Calu3 (cell line): ENCODE measurements at regions of chr2 and their contacts with region 1.

Region 1: DNA sequence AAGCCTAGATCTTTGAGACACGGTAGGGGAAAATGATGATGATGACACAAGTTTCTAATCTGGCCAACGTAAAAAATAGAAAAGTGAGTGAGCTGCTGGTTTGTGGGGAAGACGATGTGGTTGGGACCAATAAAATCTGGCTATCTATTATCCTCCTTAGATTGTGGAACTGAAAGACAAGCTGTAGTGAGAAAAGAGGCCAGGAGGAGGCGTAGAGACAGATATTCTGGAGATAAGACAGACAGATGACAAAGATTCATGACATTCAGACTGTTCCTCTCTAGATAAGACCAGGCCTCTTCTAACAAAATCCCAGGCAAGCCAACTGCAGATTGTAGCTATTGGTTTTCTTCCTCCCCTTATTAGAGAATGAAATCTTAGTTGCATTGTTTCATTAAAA is 376.3 kb upstream of the UBE2E3 start:
- DNase-seq: peak; percentile 10
- H3K4me3 Mint-ChIP-seq: no peak overlapping the region
- H3K27ac Mint-ChIP-seq: no peak overlapping the region
- H3K4me1 Mint-ChIP-seq: no peaks in the 10 kb centered on the region
- H3K27me3 Mint-ChIP-seq: no peaks in the 10 kb centered on the region
- CTCF ChIP-seq: peak; percentile 43

Region 2: GRCh38 chr2:180761224-180761623 is 157.1 kb after region 1 on chr2:
- CTCF ChIA-PET with region 1: no interaction called
- intact Hi-C with region 1: loop called (anchors 5 kb)
- DNase-seq: peak; percentile 38
- H3K4me3 Mint-ChIP-seq: no peak overlapping the region
- H3K27ac Mint-ChIP-seq: no peak overlapping the region
- H3K4me1 Mint-ChIP-seq: peaks cover 32% of the 10 kb centered on the region
- H3K27me3 Mint-ChIP-seq: no peaks in the 10 kb centered on the region
- CTCF ChIP-seq: no peak

Region 3: DNA sequence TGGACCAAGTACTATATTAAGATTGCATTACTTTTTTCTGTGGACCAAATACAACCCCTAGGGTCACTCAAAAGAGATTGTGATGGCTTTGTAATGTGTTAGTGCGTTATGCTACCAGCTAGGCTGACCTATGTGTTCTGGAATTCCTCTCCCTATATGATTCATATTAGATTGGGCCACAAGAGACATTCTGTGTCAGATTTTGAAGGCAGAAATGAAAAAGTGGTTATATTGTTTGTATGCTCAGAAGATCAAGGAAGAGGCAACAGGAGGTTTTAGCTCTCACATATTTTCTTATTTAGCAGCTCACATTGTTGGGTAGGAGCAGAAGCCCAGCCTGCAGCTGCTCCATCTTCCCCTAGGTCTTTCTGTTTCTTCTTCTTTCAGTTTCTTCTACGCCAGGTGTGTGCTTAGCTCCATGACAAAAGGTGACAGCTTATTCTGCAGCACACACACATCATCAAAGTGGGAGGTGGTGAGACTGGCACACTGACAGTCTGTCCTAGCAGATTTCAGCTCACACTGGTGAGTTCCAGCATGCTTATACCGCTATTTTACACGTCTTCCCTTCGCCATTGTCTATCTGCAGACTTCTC is 219.6 kb after region 1 on chr2:
- CTCF ChIA-PET with region 1: no interaction called
- intact Hi-C with region 1: no loop called
- DNase-seq: no peak
- H3K4me3 Mint-ChIP-seq: no peak overlapping the region
- H3K27ac Mint-ChIP-seq: no peak overlapping the region
- H3K4me1 Mint-ChIP-seq: peaks cover under 1% of the 10 kb centered on the region
- H3K27me3 Mint-ChIP-seq: no peaks in the 10 kb centered on the region
- CTCF ChIP-seq: no peak